ENCODE measurements at regions of chr12 and their contacts with region 1.

Region 1: GRCh38 chr12:105420659-105421240 is 90.3 kb downstream of the C12orf75 start:
- DNase-seq: peak; percentile 7
- ATAC-seq: peak; percentile 95
- H3K4me3 ChIP-seq: no peak overlapping the region
- H3K27ac ChIP-seq: no peak overlapping the region
- H3K4me1 ChIP-seq: no peaks in the 10 kb centered on the region
- H3K27me3 ChIP-seq: no peaks in the 10 kb centered on the region
- CTCF ChIP-seq: peak; percentile 83 to 95 (median 95); a peak in 5 of 6 replicates
- EP300 ChIP-seq: no peak
- POLR2A ChIP-seq: no peak
- RAD21 ChIP-seq: peak; percentile 98

Region 2: GRCh38 chr12:105705765-105706164 is 285.0 kb after region 1 on chr12:
- CTCF ChIA-PET with region 1: no interaction called
- POLR2A ChIA-PET with region 1: no interaction called
- RAD21 ChIA-PET with region 1: no interaction called
- SMC1A ChIA-PET with region 1: no interaction called
- in situ Hi-C with region 1: no loop called
- intact Hi-C with region 1: loop called (anchors 5 kb)
- DNase-seq: no peak
- ATAC-seq: peak; percentile 32; the same call in 1 of the 3 replicates
- H3K4me3 ChIP-seq: no peak overlapping the region
- H3K27ac ChIP-seq: no peak overlapping the region
- H3K4me1 ChIP-seq: no peaks in the 10 kb centered on the region
- H3K27me3 ChIP-seq: no peaks in the 10 kb centered on the region
- CTCF ChIP-seq: peak; percentile 37 to 70 (median 54); a peak in 5 of 6 replicates
- EP300 ChIP-seq: no peak
- POLR2A ChIP-seq: no peak
- RAD21 ChIP-seq: peak; percentile 56

Region 3: DNA sequence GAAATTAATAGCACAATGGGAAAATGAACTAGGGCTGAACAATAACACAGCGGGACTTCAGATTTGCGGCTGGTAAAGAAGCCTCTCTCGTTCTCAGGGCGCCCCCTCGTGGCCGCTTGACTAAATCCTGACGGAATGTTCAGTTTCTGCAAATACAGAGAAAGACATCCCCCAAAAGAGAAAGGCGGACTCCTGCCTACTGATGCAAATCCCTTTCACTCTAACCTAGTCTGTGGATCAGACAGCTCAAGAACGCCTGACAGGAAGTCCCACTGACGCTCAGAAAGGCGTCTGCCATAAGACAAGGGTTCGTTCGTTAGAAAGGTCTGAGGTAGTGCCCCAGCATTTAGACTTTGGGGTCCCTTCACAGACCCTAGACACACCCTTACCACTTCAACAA is 715.5 kb after region 1 on chr12:
- CTCF ChIA-PET with region 1: interaction called, 84 read pairs
- POLR2A ChIA-PET with region 1: no interaction called
- RAD21 ChIA-PET with region 1: interaction called, 19 read pairs
- SMC1A ChIA-PET with region 1: interaction called, 48 read pairs
- in situ Hi-C with region 1: loop called (anchors 5 kb)
- intact Hi-C with region 1: loop called (anchors 1 kb)
- DNase-seq: no peak
- ATAC-seq: peak; percentile 80
- H3K4me3 ChIP-seq: no peak overlapping the region
- H3K27ac ChIP-seq: no peak overlapping the region
- H3K4me1 ChIP-seq: no peaks in the 10 kb centered on the region
- H3K27me3 ChIP-seq: peaks cover 7 to 26% of the 10 kb centered on the region in 2 experiments
- CTCF ChIP-seq: peak; percentile 61 to 88 (median 72)
- EP300 ChIP-seq: no peak
- POLR2A ChIP-seq: no peak
- RAD21 ChIP-seq: peak; percentile 89

Region 4: DNA sequence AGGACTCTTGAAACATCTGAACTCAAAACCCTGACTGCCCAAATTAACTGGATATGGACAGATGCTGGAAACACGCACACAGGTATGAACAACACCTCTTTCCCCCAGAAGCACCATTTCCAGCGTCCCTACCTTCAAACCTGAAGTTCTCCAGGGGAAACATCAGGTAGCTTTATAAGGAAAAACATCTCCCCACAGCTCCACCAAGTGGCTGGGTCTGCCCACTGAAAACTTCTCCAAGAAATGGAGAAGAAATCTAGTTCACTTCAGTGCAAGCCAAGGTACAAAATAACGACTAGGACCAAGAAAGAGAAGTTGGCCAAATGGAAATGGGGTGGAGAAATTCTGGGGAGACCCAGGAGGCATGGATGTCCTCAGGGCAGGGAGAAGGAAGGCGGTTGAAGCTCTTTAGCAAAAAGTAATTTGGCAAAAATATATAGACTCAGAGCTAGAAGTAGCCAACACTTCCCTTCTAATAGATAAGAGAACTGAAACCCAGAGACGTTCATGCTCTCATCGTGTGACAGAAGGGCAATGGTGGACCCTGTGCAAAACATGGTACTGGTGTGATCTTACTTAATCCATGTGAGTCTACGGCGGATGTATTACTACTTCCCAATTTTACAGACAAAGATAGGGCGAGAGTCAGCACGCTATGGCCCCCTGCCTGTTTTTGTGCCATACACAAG is 728.5 kb after region 1 on chr12:
- CTCF ChIA-PET with region 1: interaction called, 17 read pairs
- POLR2A ChIA-PET with region 1: no interaction called
- RAD21 ChIA-PET with region 1: interaction called, 10 read pairs
- SMC1A ChIA-PET with region 1: interaction called, 13 read pairs
- in situ Hi-C with region 1: no loop called
- intact Hi-C with region 1: loop called (anchors 1 kb)
- DNase-seq: no peak
- ATAC-seq: peak; percentile 61
- H3K4me3 ChIP-seq: no peak overlapping the region
- H3K27ac ChIP-seq: no peak overlapping the region
- H3K4me1 ChIP-seq: no peaks in the 10 kb centered on the region
- H3K27me3 ChIP-seq: no peaks in the 10 kb centered on the region; a peak in 2 of 4 replicates
- CTCF ChIP-seq: peak; percentile 43 to 51 (median 48); a peak in 5 of 6 replicates
- EP300 ChIP-seq: no peak
- POLR2A ChIP-seq: no peak
- RAD21 ChIP-seq: 0 out of 2 replicates have a peak, but pooled peaks have one; percentile 19

Region 5: GRCh38 chr12:106223485-106224354 is 803.0 kb after region 1 on chr12:
- CTCF ChIA-PET with region 1: interaction called, 13 read pairs
- POLR2A ChIA-PET with region 1: no interaction called
- RAD21 ChIA-PET with region 1: interaction called, 7 read pairs
- SMC1A ChIA-PET with region 1: interaction called, 5 read pairs
- in situ Hi-C with region 1: loop called (anchors 5 kb)
- intact Hi-C with region 1: loop called (anchors 1 kb)
- DNase-seq: no peak
- ATAC-seq: peak; percentile 94
- H3K4me3 ChIP-seq: no peak overlapping the region
- H3K27ac ChIP-seq: no peak overlapping the region
- H3K4me1 ChIP-seq: no peaks in the 10 kb centered on the region
- H3K27me3 ChIP-seq: no peaks in the 10 kb centered on the region
- CTCF ChIP-seq: peak; percentile 84 to 98 (median 95)
- EP300 ChIP-seq: no peak
- POLR2A ChIP-seq: no peak
- RAD21 ChIP-seq: peak; percentile 59

Region 6: DNA sequence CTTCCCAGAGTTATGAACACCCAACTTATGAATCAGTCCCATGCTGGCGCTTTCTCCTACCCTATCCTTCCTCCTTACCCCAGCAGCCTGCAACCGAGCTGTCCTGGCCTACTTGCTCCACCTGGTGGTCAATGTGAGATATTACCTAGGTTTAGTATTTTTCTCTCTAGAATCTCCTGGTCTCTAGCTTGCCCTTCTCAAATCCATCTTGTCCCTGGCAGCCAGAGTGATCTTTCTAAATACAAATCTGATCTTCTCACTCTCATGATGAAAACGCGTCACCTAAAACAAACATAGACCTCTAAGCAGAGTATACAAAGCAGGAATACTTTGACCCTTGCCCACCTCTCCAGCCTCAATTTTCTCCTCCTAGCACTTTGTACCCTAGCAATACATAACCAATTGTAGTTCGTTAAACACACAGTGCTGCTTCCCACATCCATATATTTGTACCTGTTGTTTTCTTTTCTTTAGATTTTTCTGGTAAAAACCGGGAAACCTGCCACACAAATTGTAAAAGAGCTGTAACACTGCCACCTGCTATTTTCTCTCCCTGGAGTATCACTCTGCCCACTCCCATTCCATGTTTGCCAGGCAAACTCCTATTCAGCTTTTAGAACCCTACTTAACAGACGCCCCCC is 861.8 kb after region 1 on chr12:
- CTCF ChIA-PET with region 1: interaction called, 7 read pairs
- POLR2A ChIA-PET with region 1: no interaction called
- RAD21 ChIA-PET with region 1: no interaction called
- SMC1A ChIA-PET with region 1: no interaction called
- in situ Hi-C with region 1: no loop called
- intact Hi-C with region 1: loop called (anchors 5 kb)
- DNase-seq: no peak
- ATAC-seq: peak; percentile 86
- H3K4me3 ChIP-seq: no peak overlapping the region
- H3K27ac ChIP-seq: no peak overlapping the region
- H3K4me1 ChIP-seq: no peaks in the 10 kb centered on the region
- H3K27me3 ChIP-seq: no peaks in the 10 kb centered on the region; a peak in 1 of 4 replicates
- CTCF ChIP-seq: peak; percentile 69 to 74 (median 74); a peak in 5 of 6 replicates
- EP300 ChIP-seq: no peak
- POLR2A ChIP-seq: no peak
- RAD21 ChIP-seq: peak; percentile 76